GM10248 (cell line): ENCODE measurements at regions of chr1 and their contacts with region 1.

Region 1: DNA sequence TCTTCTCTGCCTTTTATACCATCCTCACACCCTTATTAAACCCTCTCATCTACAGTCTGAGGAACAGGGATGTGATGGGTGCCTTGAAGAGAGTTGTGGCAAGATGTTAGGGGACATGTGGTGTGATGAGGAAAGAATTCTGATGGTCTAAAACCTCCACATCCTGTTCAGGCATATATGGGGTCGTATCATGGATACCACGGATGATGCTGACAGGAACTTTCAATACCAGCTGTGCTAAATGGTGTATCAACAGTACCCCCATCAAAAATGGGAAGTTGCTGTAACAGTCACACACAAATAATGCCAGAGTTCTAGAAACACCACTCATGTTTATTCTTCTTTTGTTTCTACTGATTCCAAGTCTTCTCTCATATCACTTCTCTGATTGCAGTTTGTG is 12.9 kb downstream of the OR2T6 start:
- DNase-seq: no peak
- CTCF ChIP-seq: no peak

Region 2: DNA sequence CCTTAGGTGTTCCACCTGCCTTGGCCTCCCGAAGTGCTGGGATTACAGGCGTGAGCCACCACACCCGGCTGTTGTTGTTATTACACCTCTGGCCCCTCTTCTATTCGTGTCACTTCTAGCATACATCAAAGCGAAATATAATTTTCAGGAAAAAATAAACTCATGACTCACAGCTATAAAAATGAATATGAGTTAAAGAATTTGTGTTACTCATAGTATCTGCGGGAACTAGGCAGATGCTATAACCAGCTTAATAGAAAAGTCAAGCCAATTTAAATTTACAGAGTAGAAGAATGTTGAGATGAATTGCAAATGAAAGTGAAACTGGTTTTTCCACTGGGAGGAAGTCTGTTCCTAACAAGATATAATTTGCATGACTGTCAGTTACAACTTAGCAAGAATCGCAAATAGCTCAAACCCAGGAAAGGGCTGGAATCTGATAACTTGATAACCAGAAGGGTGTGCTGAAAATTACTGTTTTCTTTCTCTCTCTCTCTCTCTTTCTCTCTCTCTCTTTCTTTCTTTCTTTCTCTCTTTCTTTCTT is 481.9 kb before region 1 on chr1:
- CTCF ChIA-PET with region 1: no interaction called
- POLR2A ChIA-PET with region 1: no interaction called
- DNase-seq: no peak
- CTCF ChIP-seq: no peak

Region 3: GRCh38 chr1:248404024-248404423 is 15.6 kb after region 1 on chr1:
- CTCF ChIA-PET with region 1: interaction called, 10 read pairs
- POLR2A ChIA-PET with region 1: no interaction called
- DNase-seq: no peak
- CTCF ChIP-seq: no peak

Region 4: GRCh38 chr1:248421384-248421783 is 33.0 kb after region 1 on chr1:
- CTCF ChIA-PET with region 1: no interaction called
- POLR2A ChIA-PET with region 1: no interaction called
- DNase-seq: no peak
- CTCF ChIP-seq: no peak